CD8-positive, alpha-beta T cell (primary cell): ENCODE measurements at regions of chr1 and their contacts with region 1.

Region 1: DNA sequence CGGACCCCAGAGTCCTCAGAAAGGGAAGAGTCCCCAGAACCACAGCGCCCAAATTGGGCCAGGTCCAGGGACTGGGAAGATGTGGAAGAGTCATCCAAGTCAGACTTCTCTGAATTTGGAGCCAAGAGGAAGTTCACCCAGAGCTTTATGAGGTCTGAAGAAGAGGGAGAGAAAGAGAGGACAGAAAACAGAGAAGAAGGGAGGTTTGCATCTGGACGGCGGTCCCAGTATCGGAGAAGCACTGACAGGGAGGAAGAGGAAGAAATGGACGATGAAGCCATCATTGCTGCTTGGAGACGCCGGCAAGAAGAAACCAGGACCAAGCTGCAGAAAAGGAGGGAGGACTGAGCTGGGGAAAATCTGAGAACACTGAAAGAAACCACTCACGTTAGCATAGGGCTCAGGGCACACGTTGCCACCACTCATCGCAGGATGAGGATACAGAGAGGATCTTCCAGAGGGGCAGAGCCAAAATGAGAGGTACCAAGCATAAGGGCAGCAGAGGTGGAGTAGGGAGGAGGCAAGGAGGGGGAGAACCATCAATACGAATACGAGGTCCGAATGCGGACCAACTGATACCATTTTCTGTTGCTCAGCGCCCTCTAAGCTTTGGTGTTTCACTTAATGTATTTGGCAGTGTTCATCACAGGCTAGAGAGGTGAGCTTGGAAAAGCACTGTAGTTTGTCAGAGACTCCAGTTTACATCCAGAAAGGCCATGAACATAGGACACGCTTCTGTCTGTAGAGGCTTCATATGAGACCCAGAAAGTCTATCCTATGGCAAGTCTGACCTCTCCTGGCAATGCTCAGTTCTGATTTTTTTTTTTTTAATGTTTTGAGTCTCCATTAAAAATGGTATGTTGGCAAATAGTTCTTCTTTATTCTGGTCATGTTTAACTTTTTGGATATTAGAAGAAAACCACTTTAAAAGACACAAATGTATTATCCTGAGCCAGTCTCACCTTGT is 34.7 kb downstream of the STYXL2 start:
- DNase-seq: peak in 2 of 9 experiments; percentile 32 to 46
- ATAC-seq: peak; percentile 36
- H3K4me3 ChIP-seq: no peak overlapping the region
- H3K4me3 Mint-ChIP-seq: no peak overlapping the region
- H3K27ac ChIP-seq: no peak overlapping the region
- H3K27ac Mint-ChIP-seq: no peak overlapping the region
- H3K4me1 ChIP-seq: no peaks in the 10 kb centered on the region
- H3K4me1 Mint-ChIP-seq: no peaks in the 10 kb centered on the region
- H3K27me3 ChIP-seq: peaks cover 0 to 2% of the 10 kb centered on the region in 2 experiments
- H3K27me3 Mint-ChIP-seq: peaks cover 18% of the 10 kb centered on the region
- CTCF ChIP-seq: peak; percentile 41

Region 2: DNA sequence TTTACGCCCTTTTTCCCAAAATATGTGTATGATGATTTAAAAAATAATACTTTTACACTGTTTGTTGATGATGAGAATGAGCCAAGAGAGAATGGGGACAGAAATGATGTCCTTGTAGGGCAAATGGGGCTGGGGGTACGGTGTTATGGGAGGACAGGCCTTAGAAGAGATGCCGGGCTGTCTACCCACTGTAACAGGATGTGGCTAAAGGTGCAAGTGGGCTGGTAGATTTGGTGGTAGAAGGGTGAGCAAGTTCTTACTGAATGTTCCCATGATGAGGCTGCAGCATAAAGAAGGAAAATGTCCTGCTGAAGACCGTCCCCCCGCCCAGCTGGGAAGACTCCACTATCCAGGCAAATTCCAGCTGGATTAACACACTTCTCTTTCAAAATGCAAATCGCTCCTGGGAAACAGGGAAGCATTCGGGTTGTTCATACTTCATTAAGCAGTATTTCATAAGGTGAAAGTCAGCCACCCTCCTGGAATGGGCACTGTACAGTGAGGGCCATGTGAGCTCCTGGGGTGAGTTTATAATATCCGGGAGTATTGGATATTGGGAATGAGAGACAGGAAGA is 52.3 kb before region 1 on chr1:
- CTCF ChIA-PET with region 1: interaction called, 15 read pairs
- POLR2A ChIA-PET with region 1: no interaction called
- intact Hi-C with region 1: no loop called
- DNase-seq: peak in 2 of 9 experiments; percentile 20 to 46
- ATAC-seq: no peak
- H3K4me3 ChIP-seq: no peak overlapping the region
- H3K4me3 Mint-ChIP-seq: peak overlapping the region; percentile 52
- H3K27ac ChIP-seq: peak overlapping the region in 1 of 2 experiments; percentile 28
- H3K27ac Mint-ChIP-seq: no peak overlapping the region
- H3K4me1 ChIP-seq: peaks cover 20% of the 10 kb centered on the region
- H3K4me1 Mint-ChIP-seq: peaks cover 30% of the 10 kb centered on the region
- H3K27me3 ChIP-seq: no peaks in the 10 kb centered on the region
- H3K27me3 Mint-ChIP-seq: no peaks in the 10 kb centered on the region
- CTCF ChIP-seq: no peak

Region 3: GRCh38 chr1:167093846-167094516 is 34.6 kb before region 1 on chr1 and contains the start of gene STYXL2:
- CTCF ChIA-PET with region 1: interaction called, 15 read pairs
- POLR2A ChIA-PET with region 1: no interaction called
- intact Hi-C with region 1: no loop called
- DNase-seq: no peak
- ATAC-seq: no peak
- H3K4me3 ChIP-seq: no peak within 1 kb of the TSS
- H3K4me3 Mint-ChIP-seq: no peak within 1 kb of the TSS
- H3K27ac ChIP-seq: no peak within 1 kb of the TSS
- H3K27ac Mint-ChIP-seq: no peak within 1 kb of the TSS
- H3K4me1 ChIP-seq: peaks cover 23% of the 10 kb centered on the region
- H3K4me1 Mint-ChIP-seq: peaks cover 41% of the 10 kb centered on the region
- H3K27me3 ChIP-seq: no peaks in the 10 kb centered on the region
- H3K27me3 Mint-ChIP-seq: peaks cover 2% of the 10 kb centered on the region
- CTCF ChIP-seq: no peak
- total RNA-seq, gene STYXL2: not detected